ENCODE measurements at regions of chr11 and their contacts with region 1.

Region 1: DNA sequence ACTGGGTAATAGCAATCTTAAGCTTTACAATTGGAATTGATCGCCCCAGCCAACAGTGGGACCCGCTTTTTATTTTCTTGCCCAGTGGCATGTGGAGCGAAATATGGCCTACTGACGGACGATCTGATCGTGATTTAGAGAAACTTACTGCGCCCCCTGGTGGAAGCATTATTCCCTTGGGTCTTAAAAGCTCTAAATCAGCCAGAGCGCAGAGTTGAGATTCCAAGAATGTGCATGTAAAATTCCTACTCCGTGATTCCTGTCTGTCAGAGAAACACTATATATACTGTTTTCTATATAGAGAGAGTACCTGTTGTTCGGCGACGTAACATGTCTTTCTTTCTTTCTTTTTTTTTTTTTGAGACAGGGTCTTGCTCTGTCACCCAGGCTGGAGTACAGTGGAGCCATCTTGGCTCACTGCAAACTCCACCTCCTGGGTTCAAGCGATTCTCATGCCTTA is 3.7 kb upstream of the DPF2 start:
- DNase-seq: peak; percentile 76 to 93
- ATAC-seq: peak; percentile 68 to 81
- H3K4me3 ChIP-seq: no peak overlapping the region
- H3K27ac ChIP-seq: peak overlapping the region; percentile 23 to 53; a peak in 4 of 6 replicates
- H3K4me1 ChIP-seq: peaks cover 9% of the 10 kb centered on the region
- CTCF ChIP-seq: peak; percentile 85
- EP300 ChIP-seq: no peak
- POLR2A ChIP-seq: no peak
- RAD21 ChIP-seq: peak; percentile 68 to 69

Region 2: DNA sequence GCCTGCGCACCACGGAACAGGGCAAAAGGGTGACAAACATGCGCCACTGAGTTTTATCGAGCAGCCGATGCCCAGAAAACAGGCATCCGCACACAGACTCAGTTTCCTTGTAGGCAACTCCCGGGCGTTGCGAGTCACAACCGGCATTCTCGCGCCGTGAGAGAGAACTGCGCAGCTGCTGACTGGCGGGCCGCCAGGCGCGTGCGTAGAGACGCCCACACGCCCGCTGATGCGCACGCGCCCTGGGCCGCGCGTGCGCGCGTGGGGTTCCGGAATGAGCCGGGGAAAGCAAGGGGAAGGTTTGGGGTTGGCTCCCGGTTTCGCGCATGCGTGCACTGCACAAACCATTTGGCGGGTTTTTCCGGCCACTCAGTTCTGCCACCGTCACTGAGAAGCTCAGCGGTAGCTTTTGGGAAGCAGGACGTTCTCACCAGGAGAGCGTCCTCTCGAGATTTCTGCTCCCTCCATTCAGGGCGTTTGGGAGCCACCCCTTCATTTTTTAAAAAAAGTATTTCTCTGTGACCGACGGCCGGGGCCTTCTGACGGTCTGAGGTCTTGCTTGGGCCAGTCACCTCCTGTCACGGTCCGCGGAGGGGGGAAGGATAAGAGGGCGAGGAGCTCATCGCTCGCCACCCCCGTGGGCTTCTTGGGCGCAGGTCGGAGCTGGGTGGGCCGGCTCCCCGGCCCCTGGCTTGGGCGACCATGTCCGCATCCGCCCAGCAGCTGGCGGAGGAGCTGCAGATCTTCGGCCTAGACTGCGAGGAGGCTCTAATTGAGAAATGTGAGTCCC is 68.2 kb before region 1 on chr11 and contains the start of gene POLA2:
- CTCF ChIA-PET with region 1: interaction called, 3,090 read pairs
- POLR2A ChIA-PET with region 1: interaction called, 11 read pairs
- DNase-seq: peak; percentile 95 to 96
- ATAC-seq: peak; percentile 79 to 94
- H3K4me3 ChIP-seq: peak within 1 kb of the TSS; percentile 77
- H3K27ac ChIP-seq: peak within 1 kb of the TSS; percentile 82 to 93
- H3K4me1 ChIP-seq: peaks cover 11% of the 10 kb centered on the region
- CTCF ChIP-seq: no peak
- EP300 ChIP-seq: no peak
- POLR2A ChIP-seq: peak; percentile 85
- RAD21 ChIP-seq: no peak
- polyA plus RNA-seq, gene POLA2: 52.3 and 55.6 TPM in 2 replicates

Region 3: DNA sequence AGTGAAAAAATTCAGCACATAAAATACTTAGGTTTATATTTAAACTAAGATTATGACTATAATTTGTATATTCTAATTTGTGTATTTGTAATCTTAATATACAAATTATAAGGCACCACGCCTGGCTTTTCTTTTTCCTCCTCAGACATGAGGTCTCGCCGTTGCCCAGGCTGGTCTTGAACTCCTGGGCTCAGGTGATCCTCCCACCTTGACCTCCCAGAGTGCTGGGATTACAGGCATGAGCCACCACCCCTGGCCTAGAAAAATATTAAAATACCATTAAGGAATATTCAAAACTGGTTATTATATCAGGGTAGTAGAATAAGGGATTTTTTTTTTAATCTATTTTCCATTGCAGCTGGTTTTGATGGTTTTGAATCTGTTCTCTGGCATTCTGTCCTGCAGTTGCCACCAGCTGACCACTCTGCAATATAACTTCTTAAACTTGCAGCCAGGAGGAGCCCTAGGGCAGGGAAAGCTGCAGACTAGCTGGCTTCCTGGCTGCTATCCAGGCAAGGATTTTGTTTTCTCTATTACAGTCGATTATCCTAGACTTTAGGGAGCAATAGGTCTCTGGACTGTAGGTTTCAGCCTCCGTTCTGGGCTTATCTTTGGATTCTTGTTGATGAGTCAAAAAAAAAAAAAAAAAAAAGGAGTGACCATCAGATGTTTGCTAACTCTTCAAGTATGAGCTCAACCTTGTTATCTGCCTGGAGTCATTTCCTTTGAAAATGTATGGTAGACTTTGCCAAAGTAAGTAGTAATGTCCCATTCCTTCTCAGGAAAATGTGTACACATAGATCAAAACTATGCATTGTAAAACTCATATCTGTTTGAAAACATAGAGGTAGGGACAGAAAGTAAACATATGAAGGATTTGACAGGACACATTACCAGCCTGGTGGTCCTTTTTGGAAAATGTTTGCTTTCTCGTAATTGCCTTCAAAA is 55.0 kb before region 1 on chr11:
- CTCF ChIA-PET with region 1: interaction called, 3,090 read pairs
- POLR2A ChIA-PET with region 1: interaction called, 45 read pairs
- DNase-seq: peak; percentile 66 to 85
- ATAC-seq: peak; percentile 88 to 89
- H3K4me3 ChIP-seq: no peak overlapping the region
- H3K27ac ChIP-seq: peak overlapping the region; percentile 23 to 69; a peak in 4 of 6 replicates
- H3K4me1 ChIP-seq: peaks cover 48% of the 10 kb centered on the region
- CTCF ChIP-seq: peak; percentile 96
- EP300 ChIP-seq: no peak
- POLR2A ChIP-seq: no peak
- RAD21 ChIP-seq: peak; percentile 99

Region 4: DNA sequence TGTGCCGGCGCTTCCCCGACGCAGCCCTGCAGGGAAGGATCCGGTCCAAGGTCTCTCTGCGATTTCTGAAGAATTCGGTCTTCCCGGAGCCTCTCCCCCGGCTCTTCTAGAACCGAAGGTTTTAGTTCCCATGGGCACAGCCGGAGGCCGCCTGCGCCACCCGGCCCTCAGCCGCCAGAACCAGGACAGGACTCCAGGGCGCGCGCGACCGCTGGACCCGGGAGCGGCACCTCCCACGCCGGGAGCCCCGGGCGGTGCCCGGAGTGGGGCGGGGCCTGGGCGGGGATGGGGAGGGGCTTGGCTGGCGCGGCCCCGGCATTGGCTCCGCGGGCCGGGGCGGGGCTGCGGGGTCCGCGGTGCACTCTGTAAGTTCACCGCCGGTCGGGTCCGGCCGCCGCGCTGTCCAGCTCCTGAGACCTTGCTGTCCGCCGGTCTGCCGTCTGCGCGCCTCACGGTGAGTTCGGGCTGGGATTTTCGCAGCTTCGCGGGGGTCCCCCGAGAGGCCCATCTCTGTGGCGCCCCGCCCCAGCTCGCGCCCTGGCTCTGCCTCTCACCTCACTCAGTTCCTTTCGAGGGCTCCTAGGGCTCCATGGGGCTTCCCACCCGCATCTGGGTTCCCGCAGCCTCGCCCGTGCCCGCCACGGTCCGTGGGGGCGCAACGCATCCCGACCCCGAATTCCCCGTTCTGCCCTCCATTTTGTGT is 15.3 kb before region 1 on chr11 and contains the start of gene CDC42EP2:
- CTCF ChIA-PET with region 1: interaction called, 3,090 read pairs
- POLR2A ChIA-PET with region 1: interaction called, 14 read pairs
- DNase-seq: peak; percentile 77 to 84
- ATAC-seq: peak; percentile 73 to 88
- H3K4me3 ChIP-seq: peak within 1 kb of the TSS; percentile 99
- H3K27ac ChIP-seq: peak within 1 kb of the TSS; percentile 91
- H3K4me1 ChIP-seq: peaks cover 55% of the 10 kb centered on the region
- CTCF ChIP-seq: no peak
- EP300 ChIP-seq: no peak
- POLR2A ChIP-seq: peak; percentile 70
- RAD21 ChIP-seq: no peak
- polyA plus RNA-seq, gene CDC42EP2: 3.0 and 3.7 TPM in 2 replicates

Region 5: DNA sequence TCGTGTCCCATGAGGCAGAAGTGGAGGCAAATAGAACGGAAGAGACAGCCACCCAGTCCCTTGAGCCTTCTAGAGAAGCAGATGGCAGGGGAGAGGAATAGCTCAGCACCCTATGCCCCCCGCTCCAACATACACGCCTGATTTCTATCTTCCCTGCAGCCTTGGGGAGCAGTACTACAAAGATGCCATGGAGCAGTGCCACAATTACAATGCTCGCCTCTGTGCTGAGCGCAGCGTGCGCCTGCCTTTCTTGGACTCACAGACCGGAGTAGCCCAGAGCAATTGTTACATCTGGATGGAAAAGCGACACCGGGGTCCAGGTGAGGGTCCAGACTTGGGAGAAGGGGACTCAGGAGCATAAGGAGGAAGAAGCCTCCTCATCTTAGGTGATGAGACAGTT is 10.3 kb after region 1 on chr11:
- CTCF ChIA-PET with region 1: interaction called, 24 read pairs
- POLR2A ChIA-PET with region 1: interaction called, 7 read pairs
- DNase-seq: no peak
- ATAC-seq: no peak
- H3K4me3 ChIP-seq: no peak overlapping the region
- H3K27ac ChIP-seq: no peak overlapping the region
- H3K4me1 ChIP-seq: peaks cover 3% of the 10 kb centered on the region; the same call in 2 of the 3 replicates
- CTCF ChIP-seq: no peak
- EP300 ChIP-seq: no peak
- POLR2A ChIP-seq: no peak
- RAD21 ChIP-seq: no peak

Region 6: GRCh38 chr11:65354265-65355012 is 24.5 kb after region 1 on chr11 and contains the start of gene TIGD3:
- CTCF ChIA-PET with region 1: interaction called, 46 read pairs
- POLR2A ChIA-PET with region 1: interaction called, 8 read pairs
- DNase-seq: peak; percentile 93 to 99
- ATAC-seq: peak; percentile 90 to 95
- H3K4me3 ChIP-seq: peak within 1 kb of the TSS; percentile 89
- H3K27ac ChIP-seq: peak within 1 kb of the TSS; percentile 75 to 88
- H3K4me1 ChIP-seq: 0 out of 3 replicates have a peak, but pooled peaks cover 4% of the 10 kb centered on the region
- CTCF ChIP-seq: no peak
- EP300 ChIP-seq: no peak
- POLR2A ChIP-seq: peak; percentile 65
- RAD21 ChIP-seq: no peak
- polyA plus RNA-seq, gene TIGD3: 0.30 and 0.37 TPM in 2 replicates